Dorsolateral prefrontal cortex (tissue), 120 donors: ENCODE measurements at regions of chr16 and their contacts with region 1.

Region 1: DNA sequence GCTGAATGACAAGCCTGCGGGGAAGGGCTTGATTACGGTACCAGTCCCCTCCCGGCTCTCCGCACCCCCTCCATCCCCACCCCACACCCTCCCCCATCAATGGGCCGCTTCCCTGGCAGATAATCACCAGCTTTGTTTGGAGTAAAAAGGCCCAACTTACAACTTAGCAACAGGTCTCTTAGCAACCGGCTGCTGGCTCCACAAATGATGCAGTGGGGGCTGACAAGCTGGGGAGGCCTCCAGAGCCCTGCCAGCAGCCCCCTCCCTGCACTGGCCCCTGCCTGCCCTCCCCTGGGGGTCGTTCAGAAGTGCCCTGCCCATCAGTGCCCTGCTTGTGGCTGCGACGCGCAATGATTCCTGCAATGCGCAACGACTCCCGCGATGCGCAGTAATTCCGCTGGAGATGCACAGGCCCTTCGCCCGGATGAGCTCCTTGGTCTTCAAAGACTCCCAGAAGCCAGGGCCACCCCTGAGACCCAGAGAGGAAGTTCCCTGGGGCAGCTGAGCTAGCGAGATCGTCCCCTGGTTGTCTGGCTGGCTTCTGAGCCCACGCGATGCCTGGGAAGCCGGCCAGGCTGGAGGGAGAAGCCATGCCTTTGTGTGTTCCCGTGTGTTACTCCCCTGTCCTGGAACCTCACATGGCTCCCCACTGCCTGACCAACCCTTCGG is 23.3 kb downstream of the CPNE2 start:
- DNase-seq: peak; percentile 53 to 90 (median 86)
- H3K4me3 ChIP-seq: peak overlapping the region in 55 of 59 donors; percentile 12 to 58 (median 37)
- H3K27ac ChIP-seq: peak overlapping the region; percentile 88 to 100 (median 98)
- H3K27me3 ChIP-seq: no peaks in the 10 kb centered on the region
- CTCF ChIP-seq: peak in 10 of 56 donors; percentile 7 to 36 (median 12)

Region 2: GRCh38 chr16:56869513-56870275 is 246.0 kb before region 1 on chr16:
- intact Hi-C with region 1: no loop called
- DNase-seq: no peak
- H3K4me3 ChIP-seq: no peak overlapping the region
- H3K27ac ChIP-seq: no peak overlapping the region
- H3K27me3 ChIP-seq: no peaks in the 10 kb centered on the region
- CTCF ChIP-seq: no peak

Region 3: GRCh38 chr16:57134982-57135381 is 19.3 kb after region 1 on chr16:
- intact Hi-C with region 1: loop called in 1 of 2 experiments (anchors 2 kb)
- DNase-seq: peak in 1 of 10 donors; percentile 12
- H3K4me3 ChIP-seq: no peak overlapping the region
- H3K27ac ChIP-seq: peak overlapping the region in 35 of 59 donors; percentile 12 to 100 (median 93)
- H3K27me3 ChIP-seq: no peaks in the 10 kb centered on the region
- CTCF ChIP-seq: no peak

Region 4: DNA sequence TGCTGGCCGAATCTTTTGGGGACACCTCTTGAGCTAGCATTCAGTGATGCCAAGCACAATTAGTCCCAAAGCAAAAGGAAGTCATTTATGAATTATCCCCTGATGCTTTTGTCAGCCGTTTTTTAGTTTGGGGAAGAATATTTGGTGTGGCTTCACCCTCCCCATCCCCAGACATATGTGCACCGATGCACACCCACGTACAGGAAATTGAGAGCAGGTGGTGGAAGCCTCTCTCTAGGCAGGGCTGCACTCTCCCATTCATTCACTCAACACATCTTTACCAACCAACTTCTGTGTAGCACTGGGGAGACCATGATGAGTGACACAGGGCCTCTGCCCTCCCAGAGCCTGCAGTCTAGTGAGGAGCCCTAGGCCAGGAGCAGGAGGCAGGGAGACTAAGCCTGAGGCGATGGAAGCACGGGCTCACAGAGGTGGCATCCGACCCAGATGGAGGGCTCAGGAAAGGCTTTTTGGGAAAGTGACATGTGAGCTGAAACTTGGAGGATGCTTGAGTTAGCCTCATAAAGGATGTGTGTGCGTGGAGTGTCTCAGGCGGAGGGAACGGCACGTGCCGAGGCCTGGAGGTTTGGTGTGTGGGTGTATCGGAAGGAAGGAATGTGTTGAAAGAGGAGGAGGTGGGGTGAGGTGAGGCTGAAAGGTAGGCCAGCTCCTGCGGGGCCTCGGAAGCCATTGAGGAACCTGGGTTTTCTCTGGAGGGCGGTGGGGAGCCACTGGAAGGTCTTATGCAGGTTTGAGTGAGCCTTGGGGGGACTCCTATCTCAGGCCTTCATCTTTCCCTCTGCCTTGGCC is 26.4 kb after region 1 on chr16:
- intact Hi-C with region 1: loop called in 1 of 2 experiments (anchors 1 kb)
- DNase-seq: peak in 3 of 10 donors; percentile 25 to 43 (median 42)
- H3K4me3 ChIP-seq: peak overlapping the region in 1 of 59 donors; percentile 18
- H3K27ac ChIP-seq: peak overlapping the region; percentile 72 to 100 (median 96)
- H3K27me3 ChIP-seq: no peaks in the 10 kb centered on the region
- CTCF ChIP-seq: no peak

Region 5: GRCh38 chr16:57167953-57168352 is 52.3 kb after region 1 on chr16:
- intact Hi-C with region 1: no loop called
- DNase-seq: no peak
- H3K4me3 ChIP-seq: peak overlapping the region in 9 of 59 donors; percentile 1 to 33 (median 17)
- H3K27ac ChIP-seq: peak overlapping the region in 54 of 59 donors; percentile 24 to 89 (median 78)
- H3K27me3 ChIP-seq: no peaks in the 10 kb centered on the region
- CTCF ChIP-seq: peak; percentile 30 to 91 (median 76)